ENCODE measurements at regions of chr4 and their contacts with region 1.

Region 1: DNA sequence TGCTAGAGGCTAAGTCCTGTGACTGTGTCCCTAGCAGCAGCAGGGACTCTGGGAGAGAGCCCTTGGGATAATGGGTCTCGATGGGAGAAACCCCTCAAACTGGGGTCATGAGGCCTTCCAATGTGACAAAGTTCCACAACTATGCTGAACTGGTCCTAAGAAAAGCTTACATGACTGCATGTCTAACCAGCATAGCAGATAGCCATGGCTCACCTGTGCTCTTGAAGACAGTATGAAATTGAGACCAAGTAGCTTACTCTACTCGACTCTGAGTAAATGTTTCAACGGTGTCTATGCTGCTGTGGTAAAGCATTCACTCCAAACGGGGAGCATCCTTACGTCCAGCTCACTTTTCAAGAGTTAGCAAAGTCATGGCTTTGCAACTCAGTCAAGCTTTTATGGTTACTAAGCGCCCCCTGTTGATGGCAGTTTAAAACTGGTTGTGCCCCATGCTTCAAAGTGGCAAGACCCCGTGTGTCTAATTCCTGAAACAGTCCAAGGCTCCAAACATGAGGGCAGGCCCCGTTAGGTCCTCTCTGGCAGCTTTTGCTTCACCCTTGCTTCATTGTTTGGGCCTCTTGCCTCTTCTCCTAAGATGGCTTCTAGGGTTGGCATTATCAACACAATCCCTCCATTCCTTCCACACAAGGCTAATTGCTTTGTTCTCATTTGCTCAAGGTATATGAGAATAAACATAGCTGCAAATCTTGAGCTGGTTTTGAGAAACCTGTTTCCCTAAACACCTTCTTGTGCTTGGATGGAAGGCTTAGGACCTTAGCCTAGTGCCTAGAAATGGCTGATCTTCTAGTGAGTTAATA is 46.6 kb downstream of the CCNG2 start:
- DNase-seq: peak in 1 of 2 donors; percentile 81
- H3K4me3 ChIP-seq: no peak overlapping the region
- H3K27ac ChIP-seq: no peak overlapping the region
- H3K4me1 ChIP-seq: no peaks in the 10 kb centered on the region
- H3K27me3 ChIP-seq: no peaks in the 10 kb centered on the region
- CTCF ChIP-seq: peak; percentile 61 to 76 (median 75)

Region 2: DNA sequence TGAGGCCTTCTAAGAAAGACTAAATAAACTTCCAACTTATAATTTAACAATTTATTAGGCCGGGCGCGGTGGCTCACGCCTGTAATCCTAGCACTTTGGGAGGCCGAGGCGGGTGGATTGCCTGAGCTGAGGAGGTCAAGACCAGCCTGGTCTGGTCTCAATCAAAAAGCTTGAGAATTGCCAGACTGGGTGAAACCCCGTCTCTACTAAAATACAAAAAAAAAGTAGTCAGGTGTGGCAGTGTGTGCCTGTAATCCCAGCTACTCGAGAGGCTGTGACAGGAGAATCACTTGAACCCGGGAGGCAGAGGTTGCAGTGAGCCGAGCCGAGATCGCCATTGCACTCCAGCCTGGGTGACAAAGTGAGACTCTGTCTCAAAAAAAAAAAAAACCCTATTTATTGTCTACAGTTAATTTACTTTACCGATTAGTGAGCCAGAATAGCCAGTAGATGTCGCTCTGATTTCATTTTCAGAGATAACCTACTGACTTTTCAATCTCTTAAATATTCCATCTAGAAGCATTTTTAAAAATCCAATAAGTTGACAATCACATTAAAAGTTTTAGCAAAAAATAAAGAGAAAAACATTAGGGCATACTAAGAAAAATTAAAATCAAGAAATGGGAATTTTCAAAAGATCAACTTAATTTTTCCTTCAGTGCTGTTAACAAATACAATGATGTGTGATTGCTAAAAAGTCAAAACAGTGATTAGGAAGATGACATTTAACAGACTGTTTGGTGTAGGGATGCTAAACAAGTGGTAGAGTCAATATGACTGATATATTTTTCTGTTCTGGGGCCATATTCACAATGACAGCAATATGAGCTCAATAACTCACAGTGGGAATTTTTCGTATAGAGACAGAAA is 772.8 kb before region 1 on chr4:
- intact Hi-C with region 1: loop called (anchors 10 kb)
- DNase-seq: no peak
- H3K4me3 ChIP-seq: no peak overlapping the region
- H3K27ac ChIP-seq: no peak overlapping the region
- H3K4me1 ChIP-seq: no peaks in the 10 kb centered on the region
- H3K27me3 ChIP-seq: no peaks in the 10 kb centered on the region
- CTCF ChIP-seq: peak in 2 of 3 experiments; percentile 56 to 79

Region 3: GRCh38 chr4:76504613-76505465 is 698.8 kb before region 1 on chr4:
- intact Hi-C with region 1: loop called (anchors 10 kb)
- DNase-seq: no peak
- H3K4me3 ChIP-seq: no peak overlapping the region
- H3K27ac ChIP-seq: no peak overlapping the region
- H3K4me1 ChIP-seq: no peaks in the 10 kb centered on the region
- H3K27me3 ChIP-seq: no peaks in the 10 kb centered on the region
- CTCF ChIP-seq: peak; percentile 60 to 72 (median 60)

Region 4: DNA sequence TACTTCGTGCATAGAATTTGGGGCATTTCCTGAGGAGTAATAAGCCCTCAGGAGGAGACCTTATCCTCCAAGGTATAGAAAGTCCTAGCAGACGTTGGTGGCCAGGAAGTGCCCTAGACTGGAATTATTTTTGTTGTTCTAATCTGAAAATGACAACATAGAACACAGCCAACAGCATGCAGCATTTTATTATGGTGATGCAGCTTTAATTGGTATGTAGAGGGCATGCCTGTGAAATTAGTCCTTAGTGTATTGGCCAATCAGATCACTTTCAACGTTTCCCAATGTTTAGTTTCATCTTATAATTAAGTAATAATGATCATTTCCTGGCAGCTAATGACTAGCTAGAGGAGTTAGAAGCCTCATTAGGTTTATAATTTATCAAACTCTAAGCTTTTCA is 569.4 kb before region 1 on chr4:
- intact Hi-C with region 1: no loop called
- DNase-seq: no peak
- H3K4me3 ChIP-seq: no peak overlapping the region
- H3K27ac ChIP-seq: peak overlapping the region; percentile 52 to 56
- H3K4me1 ChIP-seq: peaks cover 10 to 34% of the 10 kb centered on the region in 2 donors
- H3K27me3 ChIP-seq: no peaks in the 10 kb centered on the region
- CTCF ChIP-seq: no peak

Region 5: DNA sequence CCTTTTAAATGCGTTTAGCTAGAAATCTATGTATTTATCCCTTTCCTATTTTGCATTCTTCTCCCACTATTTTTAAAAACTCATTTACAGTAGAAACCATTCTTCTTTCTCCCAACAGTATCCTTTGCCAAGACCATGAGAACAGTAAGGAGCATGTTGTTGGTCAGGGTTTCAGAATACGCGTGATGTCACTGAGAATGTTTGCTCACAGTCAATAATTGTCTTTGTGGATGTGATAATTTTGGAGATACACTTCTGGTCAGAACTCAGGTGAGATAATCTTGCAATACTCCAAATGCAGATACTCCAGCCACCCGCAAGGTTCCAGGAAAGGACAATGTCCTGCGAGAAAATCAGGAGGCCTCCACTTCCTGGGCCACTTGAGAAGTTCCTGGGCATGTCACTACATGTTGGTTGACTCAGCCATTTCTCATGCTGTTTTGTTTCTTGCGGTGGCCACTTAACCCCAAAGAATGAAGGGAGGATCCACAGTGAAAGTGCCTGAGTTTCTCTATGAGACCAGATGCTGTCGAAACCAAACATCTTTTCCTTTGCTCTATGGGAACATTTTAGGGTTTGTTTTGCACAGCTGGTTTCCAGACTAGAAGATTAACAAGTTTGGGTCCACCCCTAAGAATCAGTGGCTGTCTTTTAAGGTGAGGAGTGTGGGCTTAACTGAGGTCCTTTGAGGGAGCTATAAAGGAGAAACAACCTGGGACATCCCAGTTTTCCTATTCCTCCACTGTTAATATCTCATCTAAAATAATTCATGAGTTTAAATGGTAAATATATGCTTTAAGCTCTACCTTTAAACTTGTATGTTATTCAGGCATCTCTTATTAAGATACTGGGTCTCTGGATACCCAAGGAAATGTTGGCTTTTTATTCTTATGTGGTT is 421.6 kb before region 1 on chr4:
- intact Hi-C with region 1: loop called (anchors 10 kb)
- DNase-seq: no peak
- H3K4me3 ChIP-seq: no peak overlapping the region
- H3K27ac ChIP-seq: no peak overlapping the region
- H3K4me1 ChIP-seq: no peaks in the 10 kb centered on the region
- H3K27me3 ChIP-seq: no peaks in the 10 kb centered on the region
- CTCF ChIP-seq: no peak

Region 6: GRCh38 chr4:77044461-77045150 is 159.0 kb before region 1 on chr4:
- intact Hi-C with region 1: loop called (anchors 2 kb)
- DNase-seq: no peak
- H3K4me3 ChIP-seq: no peak overlapping the region
- H3K27ac ChIP-seq: peak overlapping the region; percentile 31 to 55
- H3K4me1 ChIP-seq: peaks cover 0 to 11% of the 10 kb centered on the region in 2 donors
- H3K27me3 ChIP-seq: no peaks in the 10 kb centered on the region
- CTCF ChIP-seq: peak; percentile 32 to 56 (median 46)

Region 7: DNA sequence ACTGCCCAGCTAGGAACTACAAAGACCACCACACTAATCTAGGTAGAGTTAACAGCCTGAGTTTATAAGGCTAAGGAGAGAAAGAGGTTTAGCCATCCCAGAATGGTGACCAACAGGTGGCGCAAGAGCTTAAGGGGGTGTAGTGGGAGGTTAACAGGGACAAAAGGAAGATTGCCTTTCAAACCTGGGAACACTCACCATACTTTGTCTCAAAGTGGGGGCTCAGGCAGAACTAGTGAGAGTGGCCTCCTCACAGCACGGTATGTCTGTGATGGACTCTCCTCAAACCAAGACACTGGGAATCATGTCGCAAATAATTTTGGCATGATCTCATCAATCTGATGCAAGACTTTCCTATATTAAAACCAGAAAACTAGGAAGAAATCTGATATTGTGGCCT is 151.2 kb before region 1 on chr4:
- intact Hi-C with region 1: loop called (anchors 1 kb)
- DNase-seq: no peak
- H3K4me3 ChIP-seq: no peak overlapping the region
- H3K27ac ChIP-seq: no peak overlapping the region
- H3K4me1 ChIP-seq: peaks cover 0 to 4% of the 10 kb centered on the region in 2 donors
- H3K27me3 ChIP-seq: no peaks in the 10 kb centered on the region
- CTCF ChIP-seq: peak in 2 of 3 experiments; percentile 23 to 47

Region 8: GRCh38 chr4:77095101-77095821 is 108.3 kb before region 1 on chr4:
- intact Hi-C with region 1: loop called (anchors 1 kb)
- DNase-seq: peak; percentile 34 to 90
- H3K4me3 ChIP-seq: no peak overlapping the region
- H3K27ac ChIP-seq: peak overlapping the region in 1 of 2 donors; percentile 51
- H3K4me1 ChIP-seq: peaks cover 0 to 8% of the 10 kb centered on the region in 2 donors
- H3K27me3 ChIP-seq: no peaks in the 10 kb centered on the region
- CTCF ChIP-seq: peak; percentile 52 to 81 (median 80)

Region 9: DNA sequence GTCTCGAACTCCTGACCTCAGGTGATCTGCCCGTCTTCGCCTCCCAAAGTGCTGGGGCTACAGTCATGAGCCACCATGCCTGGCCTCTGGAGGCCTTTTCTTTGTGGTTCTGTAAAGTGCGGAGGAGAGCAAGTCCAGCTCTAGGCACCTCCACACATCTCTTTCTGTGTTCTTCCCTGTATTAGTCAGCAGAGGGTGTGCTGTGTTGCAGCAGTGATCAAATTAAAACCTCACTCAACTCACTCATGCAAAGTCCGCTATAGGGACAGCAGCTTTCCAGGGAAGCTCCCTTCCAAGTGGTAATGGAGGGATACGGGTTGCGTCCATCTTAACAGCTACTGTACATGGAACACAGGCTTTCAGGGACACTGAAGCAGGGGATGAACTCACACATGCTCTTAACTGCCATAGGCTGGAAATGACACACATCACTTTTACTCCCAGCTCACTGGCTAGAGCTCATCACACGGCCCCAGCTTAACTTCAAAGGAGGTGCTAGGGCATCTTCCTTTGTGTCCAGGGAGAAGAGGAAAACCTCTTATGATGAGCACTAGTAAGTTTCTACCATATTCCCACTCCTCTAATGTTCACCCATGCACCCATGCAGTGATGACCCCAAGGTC is 82.6 kb before region 1 on chr4:
- intact Hi-C with region 1: no loop called
- DNase-seq: no peak
- H3K4me3 ChIP-seq: no peak overlapping the region
- H3K27ac ChIP-seq: no peak overlapping the region
- H3K4me1 ChIP-seq: no peaks in the 10 kb centered on the region
- H3K27me3 ChIP-seq: no peaks in the 10 kb centered on the region
- CTCF ChIP-seq: no peak

Region 10: DNA sequence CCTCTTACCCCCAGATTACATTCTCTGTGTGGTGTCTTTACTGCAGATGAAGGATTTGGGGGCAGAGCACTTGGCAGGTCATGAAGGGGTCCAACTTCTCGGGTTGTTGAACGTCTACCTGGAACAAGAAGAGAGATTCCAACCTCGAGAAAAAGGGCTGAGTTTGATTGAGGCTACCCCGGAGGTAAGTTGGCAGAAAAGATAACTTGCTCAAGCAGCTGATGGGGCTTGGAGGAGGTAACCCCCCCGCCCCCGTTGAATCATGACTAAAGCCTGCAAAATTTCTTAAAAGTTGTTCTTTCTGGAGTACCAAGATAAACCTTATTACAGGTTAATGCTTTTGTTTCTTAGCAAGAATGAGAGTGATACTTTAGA is 45.1 kb before region 1 on chr4:
- intact Hi-C with region 1: no loop called
- DNase-seq: peak in 1 of 2 donors; percentile 67
- H3K4me3 ChIP-seq: peak overlapping the region; percentile 96 to 98
- H3K27ac ChIP-seq: peak overlapping the region; percentile 92 to 97
- H3K4me1 ChIP-seq: peaks cover 0 to 7% of the 10 kb centered on the region in 2 donors
- H3K27me3 ChIP-seq: no peaks in the 10 kb centered on the region
- CTCF ChIP-seq: no peak

Measured in ascending aorta (tissue), 2 donors.